GM12878 (cell line): ENCODE measurements at regions of chr2 and their contacts with region 1.

Region 1: GRCh38 chr2:18722101-18722500 is 132.7 kb upstream of the NT5C1B start:
- DNase-seq: no peak
- ATAC-seq: no peak
- H3K4me3 ChIP-seq: no peak overlapping the region
- H3K27ac ChIP-seq: no peak overlapping the region
- H3K4me1 ChIP-seq: no peaks in the 10 kb centered on the region
- H3K27me3 ChIP-seq: no peaks in the 10 kb centered on the region
- CTCF ChIP-seq: no peak
- EP300 ChIP-seq: no peak
- POLR2A ChIP-seq: no peak
- RAD21 ChIP-seq: no peak

Region 2: DNA sequence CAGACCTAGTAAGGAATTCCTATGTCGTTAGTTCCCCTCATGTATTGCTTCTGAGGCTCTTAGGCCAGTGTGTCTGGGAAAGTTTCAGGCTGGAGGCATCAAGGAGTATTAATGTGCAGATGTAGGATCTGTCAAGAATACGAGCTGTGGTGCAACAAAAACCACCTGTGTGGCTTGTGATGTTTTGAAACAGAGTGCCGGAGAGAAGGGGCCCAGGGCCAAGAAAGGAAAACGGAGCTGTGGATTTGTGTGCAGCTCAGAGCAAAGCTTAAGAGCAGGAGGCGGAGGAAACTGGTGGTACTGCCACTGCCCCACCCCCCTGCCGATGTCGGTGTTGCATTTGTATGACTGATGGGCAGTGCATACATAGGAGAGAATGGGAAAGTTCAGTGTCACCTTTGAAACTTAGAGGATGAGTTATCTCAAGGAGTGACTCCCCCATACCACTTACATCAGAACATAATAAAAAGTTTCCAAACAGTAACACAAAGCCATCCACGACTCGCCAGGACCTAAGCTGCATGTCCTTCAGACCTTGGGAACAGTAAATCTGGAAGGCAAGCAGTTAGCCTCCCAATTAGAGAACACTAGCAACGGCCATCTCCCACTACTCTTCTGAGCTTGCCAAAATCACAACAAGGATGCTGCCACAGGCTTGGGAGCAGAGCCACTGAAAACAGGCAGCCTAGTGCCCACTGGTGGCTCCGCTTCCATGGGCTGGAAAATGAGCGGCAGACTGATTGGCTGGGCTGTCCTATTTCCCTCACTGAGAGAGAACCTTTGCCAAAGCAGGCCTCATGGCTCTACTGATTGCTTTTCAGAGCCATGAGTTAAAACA is 20.0 kb after region 1 on chr2:
- CTCF ChIA-PET with region 1: no interaction called
- POLR2A ChIA-PET with region 1: no interaction called
- RAD21 ChIA-PET with region 1: no interaction called
- SMC1A ChIA-PET with region 1: interaction called, 3 read pairs
- in situ Hi-C with region 1: no loop called
- intact Hi-C with region 1: loop called (anchors 1 kb)
- DNase-seq: no peak
- ATAC-seq: no peak
- H3K4me3 ChIP-seq: no peak overlapping the region
- H3K27ac ChIP-seq: no peak overlapping the region
- H3K4me1 ChIP-seq: no peaks in the 10 kb centered on the region
- H3K27me3 ChIP-seq: no peaks in the 10 kb centered on the region; a peak in 1 of 4 replicates
- CTCF ChIP-seq: no peak
- EP300 ChIP-seq: no peak
- POLR2A ChIP-seq: no peak
- RAD21 ChIP-seq: no peak

Region 3: DNA sequence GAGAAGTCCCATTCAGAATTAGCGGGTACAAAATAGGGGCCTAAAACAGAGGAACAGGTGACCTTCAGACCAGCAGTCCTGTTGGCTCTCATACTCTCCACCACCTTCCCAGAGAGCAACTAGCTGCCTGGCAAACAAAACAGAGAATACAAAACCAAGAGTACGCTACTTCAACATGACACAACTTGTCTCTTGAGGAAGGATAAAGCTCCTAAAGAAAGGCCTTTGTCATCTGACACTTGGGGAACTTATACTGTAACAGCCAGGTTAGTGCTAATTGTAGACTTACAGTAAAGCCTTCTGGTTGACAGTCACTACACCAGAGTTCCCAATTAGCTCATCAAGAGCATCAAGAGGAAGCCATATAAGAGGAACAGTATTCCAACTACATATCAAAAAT is 149.3 kb after region 1 on chr2:
- CTCF ChIA-PET with region 1: no interaction called
- POLR2A ChIA-PET with region 1: no interaction called
- RAD21 ChIA-PET with region 1: no interaction called
- SMC1A ChIA-PET with region 1: no interaction called
- in situ Hi-C with region 1: no loop called
- intact Hi-C with region 1: no loop called
- DNase-seq: no peak
- ATAC-seq: no peak
- H3K4me3 ChIP-seq: no peak overlapping the region
- H3K27ac ChIP-seq: no peak overlapping the region
- H3K4me1 ChIP-seq: no peaks in the 10 kb centered on the region
- H3K27me3 ChIP-seq: no peaks in the 10 kb centered on the region
- CTCF ChIP-seq: no peak
- EP300 ChIP-seq: no peak
- POLR2A ChIP-seq: no peak
- RAD21 ChIP-seq: no peak